ENCODE measurements at regions of chr16 and their contacts with region 1.

Region 1: DNA sequence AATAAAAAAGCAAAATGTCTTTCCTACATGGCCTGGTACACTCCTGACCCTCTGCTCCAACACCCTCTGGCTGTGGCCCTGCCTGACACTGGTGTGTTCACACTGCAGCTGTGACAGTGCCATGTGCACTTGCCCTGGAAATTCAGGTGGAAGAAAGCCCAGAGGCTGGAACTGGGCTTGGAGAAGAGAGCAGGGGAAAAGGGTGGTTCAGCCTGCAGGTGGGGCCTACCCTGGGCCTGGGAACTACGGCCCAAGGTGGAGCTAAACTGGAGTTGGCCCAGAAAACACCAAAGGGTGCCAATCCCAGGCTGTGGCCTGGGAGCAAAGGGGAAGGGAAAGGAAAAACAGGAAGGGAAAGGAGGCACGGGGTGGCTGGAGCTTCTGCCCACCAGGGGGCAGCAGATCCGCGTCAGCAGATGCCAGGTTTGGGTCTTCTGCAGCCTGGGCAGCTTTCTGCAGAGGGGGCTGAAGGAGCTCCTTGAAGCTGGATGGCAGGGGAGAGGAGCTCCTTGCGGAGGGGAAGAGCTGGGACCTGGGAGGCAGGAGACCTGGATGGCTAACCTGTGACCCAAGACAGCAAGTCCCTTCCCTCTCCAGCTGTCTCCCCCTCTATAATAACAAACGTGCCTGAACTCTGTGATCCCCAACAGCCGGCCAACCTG is 15.4 kb upstream of the CTCF start:
- DNase-seq: peak; percentile 85
- CTCF ChIP-seq: peak; percentile 90

Region 2: DNA sequence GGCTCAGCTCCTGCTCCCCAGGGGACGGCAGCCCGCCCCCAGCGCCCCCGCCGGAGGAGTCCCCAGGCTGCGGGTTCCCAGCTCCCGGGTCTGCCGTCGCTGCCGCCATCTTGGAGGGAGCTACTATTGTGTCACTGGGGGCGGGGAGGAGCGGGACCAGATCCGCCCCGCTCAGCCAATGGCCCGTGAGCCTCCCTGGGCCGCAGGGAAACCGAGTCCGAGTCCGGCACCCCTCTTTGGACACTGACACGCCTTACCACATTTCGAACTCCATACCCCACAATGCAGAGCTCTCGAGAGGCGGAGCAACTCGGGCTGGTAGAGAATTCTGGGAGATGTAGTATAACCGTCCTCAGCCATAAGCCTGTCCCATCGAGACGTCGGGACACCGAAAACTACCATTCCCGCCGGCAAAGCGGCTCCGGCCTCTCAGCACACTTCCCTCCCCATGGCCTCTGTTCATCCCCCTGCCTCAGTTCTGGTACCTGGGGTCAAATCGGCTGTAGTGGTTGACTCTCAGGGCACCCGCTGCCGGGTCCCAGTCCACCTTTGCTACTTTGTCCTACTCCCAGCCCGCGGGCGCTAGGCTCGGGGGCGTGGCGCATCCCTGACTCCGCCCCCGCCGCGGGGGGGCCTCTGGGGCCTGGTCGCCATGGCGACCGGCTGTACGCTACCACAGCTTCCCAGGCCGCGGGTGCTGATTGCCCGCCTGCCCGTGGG is 259.7 kb after region 1 on chr16 and contains the starts of genes RANBP10 and TSNAXIP1:
- in situ Hi-C with region 1: loop called (anchors 25 kb)
- DNase-seq: peak; percentile 97
- CTCF ChIP-seq: no peak

Measured in GM13976 (cell line).